ENCODE measurements at regions of chr1 and their contacts with region 1.

Region 1: GRCh38 chr1:212368073-212368484 is 46.6 kb downstream of the PACC1 start:
- DNase-seq: peak; percentile 93
- H3K4me3 Mint-ChIP-seq: no peak overlapping the region
- H3K27ac Mint-ChIP-seq: peak overlapping the region; percentile 5
- H3K4me1 Mint-ChIP-seq: peaks cover 15% of the 10 kb centered on the region
- H3K27me3 Mint-ChIP-seq: no peaks in the 10 kb centered on the region
- CTCF ChIP-seq: peak; percentile 99

Region 2: DNA sequence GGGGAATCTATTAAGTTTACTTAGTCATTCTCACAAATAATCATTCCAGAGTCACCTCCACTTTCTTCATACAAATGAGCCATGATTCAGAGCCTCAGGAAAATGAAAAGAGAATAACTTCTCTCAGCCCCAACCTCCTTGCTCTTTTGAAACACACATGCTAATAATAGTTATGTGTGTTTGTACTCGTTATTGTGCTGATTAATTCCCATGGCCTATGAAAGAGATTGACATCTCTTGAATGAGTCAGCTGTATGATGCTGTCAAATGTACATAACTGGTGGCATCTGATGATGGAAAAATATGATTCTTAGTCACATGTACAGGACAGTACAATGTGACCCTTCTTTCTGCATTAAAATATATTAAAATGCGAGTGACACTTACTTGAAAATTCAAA is 291.0 kb before region 1 on chr1:
- CTCF ChIA-PET with region 1: interaction called, 340 read pairs
- POLR2A ChIA-PET with region 1: interaction called, 34 read pairs
- intact Hi-C with region 1: no loop called
- DNase-seq: peak; percentile 51
- H3K4me3 Mint-ChIP-seq: no peak overlapping the region
- H3K27ac Mint-ChIP-seq: peak overlapping the region; percentile 41
- H3K4me1 Mint-ChIP-seq: peaks cover 13% of the 10 kb centered on the region
- H3K27me3 Mint-ChIP-seq: no peaks in the 10 kb centered on the region
- CTCF ChIP-seq: no peak

Region 3: GRCh38 chr1:212291505-212292134 is 76.5 kb before region 1 on chr1:
- CTCF ChIA-PET with region 1: interaction called, 14 read pairs
- POLR2A ChIA-PET with region 1: interaction called, 15 read pairs
- intact Hi-C with region 1: loop called (anchors 1 kb)
- DNase-seq: peak; percentile 85
- H3K4me3 Mint-ChIP-seq: no peak overlapping the region
- H3K27ac Mint-ChIP-seq: peak overlapping the region; percentile 25
- H3K4me1 Mint-ChIP-seq: peaks cover 54% of the 10 kb centered on the region
- H3K27me3 Mint-ChIP-seq: no peaks in the 10 kb centered on the region
- CTCF ChIP-seq: peak; percentile 80

Region 4: GRCh38 chr1:212341090-212341489 is 27.0 kb before region 1 on chr1:
- CTCF ChIA-PET with region 1: interaction called, 58 read pairs
- POLR2A ChIA-PET with region 1: interaction called, 3 read pairs
- intact Hi-C with region 1: no loop called
- DNase-seq: no peak
- H3K4me3 Mint-ChIP-seq: no peak overlapping the region
- H3K27ac Mint-ChIP-seq: no peak overlapping the region
- H3K4me1 Mint-ChIP-seq: no peaks in the 10 kb centered on the region
- H3K27me3 Mint-ChIP-seq: no peaks in the 10 kb centered on the region
- CTCF ChIP-seq: no peak

Region 5: GRCh38 chr1:212355230-212355969 is 12.7 kb before region 1 on chr1:
- CTCF ChIA-PET with region 1: interaction called, 38 read pairs
- POLR2A ChIA-PET with region 1: interaction called, 4 read pairs
- intact Hi-C with region 1: no loop called
- DNase-seq: no peak
- H3K4me3 Mint-ChIP-seq: no peak overlapping the region
- H3K27ac Mint-ChIP-seq: no peak overlapping the region
- H3K4me1 Mint-ChIP-seq: peaks cover 6% of the 10 kb centered on the region
- H3K27me3 Mint-ChIP-seq: no peaks in the 10 kb centered on the region
- CTCF ChIP-seq: no peak